ENCODE measurements at regions of chr5 and their contacts with region 1.

Region 1: DNA sequence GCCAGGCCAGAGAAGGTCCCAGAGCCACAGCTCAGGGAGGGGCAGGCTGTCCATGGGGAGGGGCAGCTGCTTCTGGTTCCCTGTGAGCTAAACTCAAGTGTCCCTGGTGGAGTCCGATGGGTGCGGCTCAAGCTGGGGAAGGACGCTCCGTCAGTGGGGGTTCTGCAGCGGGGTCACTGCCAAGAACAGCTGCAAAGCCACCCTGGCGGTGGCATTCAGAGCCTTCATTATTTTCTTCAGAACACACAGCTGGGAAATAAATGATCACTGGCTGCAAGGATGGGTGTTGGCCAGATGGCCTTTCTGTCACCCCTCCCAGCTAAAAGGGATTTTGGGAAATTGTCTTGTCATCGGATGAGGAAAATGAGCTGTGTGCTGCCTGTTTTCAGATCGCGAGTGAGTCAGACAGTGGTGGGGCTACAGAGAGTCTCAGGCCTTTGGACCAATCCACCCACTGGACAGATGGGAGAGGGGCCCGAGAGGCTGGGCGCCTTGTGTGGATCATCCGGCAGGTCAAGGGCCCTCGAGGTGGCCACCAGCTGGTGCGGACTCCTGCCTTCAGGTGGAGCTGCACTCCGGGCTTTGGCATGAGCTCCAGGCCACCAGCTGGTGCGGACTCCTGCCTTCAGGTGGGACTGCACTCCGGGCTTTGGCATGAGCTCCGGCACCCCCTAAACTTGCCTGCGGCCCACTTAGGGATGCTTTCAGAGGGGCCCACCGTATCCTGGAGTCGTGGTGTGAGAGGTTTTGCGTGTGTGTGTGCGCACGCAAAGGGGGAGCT is 17.9 kb upstream of the GFPT2 start:
- DNase-seq: no peak
- ATAC-seq: peak; percentile 43; the same call in 1 of the 2 replicates
- H3K4me3 Mint-ChIP-seq: no peak overlapping the region
- H3K27ac Mint-ChIP-seq: no peak overlapping the region
- H3K4me1 Mint-ChIP-seq: peaks cover 2% of the 10 kb centered on the region; the same call in 1 of the 2 replicates
- H3K27me3 Mint-ChIP-seq: no peaks in the 10 kb centered on the region
- CTCF ChIP-seq: no peak

Region 2: DNA sequence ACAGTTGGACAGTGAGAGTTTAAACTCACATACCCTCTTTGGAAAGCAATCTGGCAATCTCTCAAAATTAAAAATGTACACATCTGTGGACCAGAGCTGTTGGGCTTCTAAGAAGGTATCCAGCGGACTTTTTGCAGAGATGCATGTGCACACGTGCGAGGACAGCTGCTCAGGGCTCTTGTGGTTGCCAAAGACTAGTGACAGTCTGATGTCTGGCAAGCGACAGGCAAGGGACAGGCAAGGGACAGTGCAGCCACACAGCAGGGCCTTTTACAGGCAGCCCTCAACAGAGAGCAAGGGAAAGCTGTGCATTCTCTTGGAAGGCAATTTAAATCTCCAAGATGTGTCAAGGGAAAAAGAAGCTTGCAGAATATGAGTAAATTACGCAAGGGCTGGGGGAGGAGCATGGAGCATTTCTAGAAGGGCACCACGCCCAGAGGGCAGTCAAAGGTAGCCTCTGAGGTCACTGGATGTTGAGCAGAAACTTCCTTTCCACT is 27.2 kb before region 1 on chr5:
- CTCF ChIA-PET with region 1: interaction called, 13 read pairs
- POLR2A ChIA-PET with region 1: interaction called, 3 read pairs
- DNase-seq: no peak
- ATAC-seq: peak; percentile 10
- H3K4me3 Mint-ChIP-seq: peak overlapping the region; percentile 50
- H3K27ac Mint-ChIP-seq: peak overlapping the region; percentile 99
- H3K4me1 Mint-ChIP-seq: peaks cover 89% of the 10 kb centered on the region
- H3K27me3 Mint-ChIP-seq: no peaks in the 10 kb centered on the region
- CTCF ChIP-seq: no peak

Region 3: GRCh38 chr5:180441563-180441962 is 70.5 kb after region 1 on chr5:
- CTCF ChIA-PET with region 1: interaction called, 12 read pairs
- POLR2A ChIA-PET with region 1: no interaction called
- DNase-seq: no peak
- ATAC-seq: no peak
- H3K4me3 Mint-ChIP-seq: no peak overlapping the region
- H3K27ac Mint-ChIP-seq: no peak overlapping the region
- H3K4me1 Mint-ChIP-seq: peaks cover 6% of the 10 kb centered on the region; the same call in 1 of the 2 replicates
- H3K27me3 Mint-ChIP-seq: no peaks in the 10 kb centered on the region; the same call in 1 of the 2 replicates
- CTCF ChIP-seq: no peak